Activated CD4-positive, alpha-beta T cell treated with anti-CD3 and anti-CD28 coated beads for 36 hours (primary cell): ENCODE measurements at regions of chrX and their contacts with region 1.

Region 1: GRCh38 chrX:136028251-136028984 is 43.2 kb downstream of the SLC9A6 start:
- DNase-seq: no peak
- ATAC-seq: no peak
- H3K4me3 Mint-ChIP-seq: no peak overlapping the region
- H3K27ac Mint-ChIP-seq: no peak overlapping the region
- H3K4me1 Mint-ChIP-seq: no peaks in the 10 kb centered on the region
- H3K27me3 Mint-ChIP-seq: no peaks in the 10 kb centered on the region

Region 2: DNA sequence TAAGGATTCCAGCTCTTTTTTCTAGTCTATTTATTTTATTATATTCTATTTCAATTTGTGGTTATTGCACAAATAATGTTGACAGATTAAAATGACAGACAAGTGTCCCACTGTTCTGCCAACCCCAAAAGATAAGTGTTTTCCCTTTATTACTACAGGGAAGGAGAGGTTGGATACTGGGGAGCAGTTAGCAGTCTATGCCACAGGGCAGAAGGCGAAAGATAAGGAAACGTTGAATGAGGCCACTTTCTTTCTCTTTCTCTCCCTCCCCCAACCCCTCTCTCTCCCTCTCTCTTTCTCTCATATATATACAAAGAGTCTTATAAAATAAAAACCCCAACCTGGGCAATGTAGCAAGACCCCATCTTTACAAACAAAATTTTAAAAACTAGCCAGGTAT is 11.5 kb before region 1 on chrX:
- CTCF ChIA-PET with region 1: interaction called, 10 read pairs
- POLR2A ChIA-PET with region 1: no interaction called
- intact Hi-C with region 1: no loop called
- DNase-seq: no peak
- ATAC-seq: no peak
- H3K4me3 Mint-ChIP-seq: no peak overlapping the region
- H3K27ac Mint-ChIP-seq: no peak overlapping the region
- H3K4me1 Mint-ChIP-seq: peaks cover 9% of the 10 kb centered on the region
- H3K27me3 Mint-ChIP-seq: no peaks in the 10 kb centered on the region

Region 3: DNA sequence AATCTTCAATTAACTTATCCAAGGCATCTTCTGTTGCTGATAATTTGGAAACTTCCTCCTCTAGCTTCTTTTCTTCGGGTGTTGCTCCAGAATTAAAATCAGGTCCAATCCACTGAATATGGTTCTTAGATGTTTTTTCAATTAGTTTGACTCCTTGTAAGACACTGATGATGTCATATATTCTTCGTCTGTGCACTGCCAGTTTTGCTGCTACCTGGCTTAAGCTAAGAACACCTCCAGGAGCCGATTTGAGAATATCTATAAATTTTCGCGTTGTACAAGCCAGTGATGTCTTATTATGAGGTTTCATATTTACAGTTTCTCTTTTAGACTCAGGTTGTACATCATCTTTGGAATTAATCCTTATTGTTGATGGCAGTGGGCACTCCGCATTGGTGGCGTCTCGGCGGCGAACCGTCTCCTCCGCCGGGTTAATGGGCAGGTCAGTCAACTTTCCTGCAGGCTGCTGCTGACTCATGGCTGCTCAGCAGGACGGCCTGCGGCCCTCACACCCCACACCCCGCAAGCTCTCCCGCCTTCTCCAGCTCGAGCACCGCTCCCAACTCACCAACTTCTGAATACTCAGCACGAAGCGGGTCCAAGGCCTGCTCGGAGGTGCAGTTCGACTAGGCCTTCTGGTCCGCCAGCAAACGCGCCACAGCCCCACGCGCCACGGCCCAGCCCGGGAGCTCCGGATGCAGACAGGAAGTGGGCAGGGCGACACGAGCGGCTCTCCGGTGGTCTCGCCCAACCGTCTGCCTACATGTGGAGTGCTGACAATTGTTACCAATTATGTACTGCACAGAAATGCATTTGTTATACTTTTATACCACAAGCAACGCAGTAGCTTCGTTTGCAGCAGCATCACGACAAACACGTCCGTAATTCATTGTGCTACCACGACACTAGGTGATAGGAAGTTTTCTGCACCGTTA is 69.7 kb after region 1 on chrX:
- CTCF ChIA-PET with region 1: no interaction called
- POLR2A ChIA-PET with region 1: no interaction called
- intact Hi-C with region 1: no loop called
- DNase-seq: no peak
- ATAC-seq: no peak
- H3K4me3 Mint-ChIP-seq: no peak overlapping the region
- H3K27ac Mint-ChIP-seq: no peak overlapping the region
- H3K4me1 Mint-ChIP-seq: no peaks in the 10 kb centered on the region
- H3K27me3 Mint-ChIP-seq: no peaks in the 10 kb centered on the region

Region 4: GRCh38 chrX:136156560-136157117 is 128.2 kb after region 1 on chrX:
- CTCF ChIA-PET with region 1: interaction called, 63 read pairs
- POLR2A ChIA-PET with region 1: no interaction called
- intact Hi-C with region 1: no loop called
- DNase-seq: no peak
- ATAC-seq: no peak
- H3K4me3 Mint-ChIP-seq: no peak overlapping the region
- H3K27ac Mint-ChIP-seq: no peak overlapping the region
- H3K4me1 Mint-ChIP-seq: peaks cover 14% of the 10 kb centered on the region
- H3K27me3 Mint-ChIP-seq: no peaks in the 10 kb centered on the region

Region 5: GRCh38 chrX:136200466-136200865 is 172.0 kb after region 1 on chrX:
- CTCF ChIA-PET with region 1: interaction called, 8 read pairs
- POLR2A ChIA-PET with region 1: no interaction called
- intact Hi-C with region 1: loop called in 1 of 2 experiments (anchors 5 kb)
- DNase-seq: peak; percentile 22
- ATAC-seq: no peak
- H3K4me3 Mint-ChIP-seq: no peak overlapping the region
- H3K27ac Mint-ChIP-seq: no peak overlapping the region
- H3K4me1 Mint-ChIP-seq: peaks cover 26% of the 10 kb centered on the region
- H3K27me3 Mint-ChIP-seq: no peaks in the 10 kb centered on the region

Region 6: GRCh38 chrX:136268051-136269048 is 239.9 kb after region 1 on chrX:
- CTCF ChIA-PET with region 1: interaction called, 36 read pairs
- POLR2A ChIA-PET with region 1: no interaction called
- intact Hi-C with region 1: loop called (anchors 1 to 2 kb)
- DNase-seq: peak; percentile 59
- ATAC-seq: peak; percentile 68
- H3K4me3 Mint-ChIP-seq: no peak overlapping the region
- H3K27ac Mint-ChIP-seq: no peak overlapping the region
- H3K4me1 Mint-ChIP-seq: peaks cover 4% of the 10 kb centered on the region
- H3K27me3 Mint-ChIP-seq: no peaks in the 10 kb centered on the region